Activated CD4-positive, alpha-beta T cell treated with anti-CD3 and anti-CD28 coated beads for 36 hours (primary cell): ENCODE measurements at regions of chr5 and their contacts with region 1.

Region 1: GRCh38 chr5:42908509-42909488 is 97.1 kb upstream of the SELENOP start:
- DNase-seq: peak; percentile 95
- ATAC-seq: peak; percentile 95
- H3K4me3 Mint-ChIP-seq: peak overlapping the region; percentile 75
- H3K27ac Mint-ChIP-seq: peak overlapping the region; percentile 48
- H3K4me1 Mint-ChIP-seq: peaks cover 14% of the 10 kb centered on the region
- H3K27me3 Mint-ChIP-seq: peaks cover 8% of the 10 kb centered on the region

Region 2: DNA sequence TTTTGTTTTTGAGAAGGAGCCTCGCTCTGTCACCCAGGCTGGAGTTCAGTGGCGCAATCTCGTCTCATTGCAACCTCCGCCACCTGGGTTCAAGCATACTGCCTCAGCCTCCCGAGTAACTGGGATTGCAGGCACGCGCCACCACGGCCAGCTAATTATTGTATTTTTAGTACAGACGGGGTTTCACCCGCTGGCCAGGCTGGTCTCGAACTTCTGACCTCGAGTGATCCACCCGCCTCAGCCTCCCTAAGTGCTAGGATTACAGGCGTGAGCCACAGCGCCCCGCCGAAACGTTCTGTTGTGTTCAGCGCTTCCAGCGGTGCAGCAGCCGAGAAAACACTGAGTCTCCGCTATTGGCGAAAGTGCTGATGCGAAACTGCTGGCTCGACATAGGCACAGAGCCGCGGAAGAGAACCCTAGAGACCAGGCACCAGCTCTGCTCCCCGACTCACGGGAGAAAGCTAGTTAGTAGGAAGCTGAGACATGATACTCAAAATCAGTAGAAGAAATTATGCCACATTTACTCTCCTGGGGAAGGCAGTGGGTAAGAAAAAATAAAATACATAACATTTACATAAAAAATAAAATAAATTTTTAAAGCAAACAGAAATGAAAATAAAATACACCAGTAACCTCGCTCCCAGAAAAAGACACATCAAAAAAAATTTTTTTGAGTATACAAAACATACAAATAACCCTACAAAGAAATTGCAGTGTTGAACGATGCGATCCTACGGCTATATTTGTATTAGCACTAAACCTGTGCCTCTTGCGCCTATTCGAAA is 99.8 kb after region 1 on chr5:
- CTCF ChIA-PET with region 1: interaction called, 12 read pairs
- POLR2A ChIA-PET with region 1: no interaction called
- intact Hi-C with region 1: no loop called
- DNase-seq: peak; percentile 94
- ATAC-seq: peak; percentile 64
- H3K4me3 Mint-ChIP-seq: peak overlapping the region; percentile 76
- H3K27ac Mint-ChIP-seq: peak overlapping the region; percentile 94
- H3K4me1 Mint-ChIP-seq: peaks cover 21% of the 10 kb centered on the region
- H3K27me3 Mint-ChIP-seq: no peaks in the 10 kb centered on the region